ENCODE measurements at regions of chr14 and their contacts with region 1.

Region 1: GRCh38 chr14:94485944-94486841 is 10.2 kb upstream of the SERPINA9 start:
- DNase-seq: peak; percentile 68
- H3K4me3 Mint-ChIP-seq: no peak overlapping the region
- H3K27ac Mint-ChIP-seq: no peak overlapping the region
- H3K4me1 Mint-ChIP-seq: no peaks in the 10 kb centered on the region
- H3K27me3 Mint-ChIP-seq: no peaks in the 10 kb centered on the region
- CTCF ChIP-seq: peak; percentile 97

Region 2: DNA sequence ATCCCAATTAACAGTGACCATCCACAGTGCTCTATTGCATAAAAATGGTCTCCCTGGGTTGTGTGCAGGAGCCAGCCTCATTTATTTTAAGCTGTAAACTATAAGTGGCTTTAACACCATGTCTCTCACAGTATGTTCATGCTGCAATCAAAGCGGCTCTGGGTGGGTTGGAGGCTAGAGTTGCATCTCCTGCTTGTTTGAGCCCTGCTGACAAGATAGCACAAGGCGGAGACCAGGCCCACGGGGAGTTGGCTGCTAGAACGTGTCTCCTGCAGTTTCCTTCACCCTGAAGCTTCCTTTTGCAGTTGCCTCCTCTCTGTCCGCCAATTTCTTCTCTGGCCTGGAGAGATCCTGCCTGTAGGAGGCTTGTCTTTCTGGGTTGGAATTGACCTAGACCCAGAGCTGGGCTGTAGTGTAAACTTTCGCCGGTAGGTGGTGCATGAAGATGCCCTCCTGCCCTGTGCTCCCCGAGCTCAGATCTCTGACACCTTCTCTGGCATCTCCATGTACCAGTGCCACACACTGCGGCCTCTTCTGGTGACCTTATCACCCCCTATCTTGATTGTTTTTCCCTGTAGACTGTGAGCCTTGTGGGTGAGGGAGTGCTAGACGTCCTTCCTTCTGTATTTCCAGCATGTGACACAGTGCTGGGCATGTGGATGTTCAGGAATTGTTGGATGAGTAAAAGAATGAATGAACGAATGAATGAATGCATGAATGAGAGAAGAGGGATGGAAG is 449.7 kb before region 1 on chr14:
- CTCF ChIA-PET with region 1: interaction called, 12 read pairs
- POLR2A ChIA-PET with region 1: no interaction called
- intact Hi-C with region 1: no loop called
- DNase-seq: peak; percentile 79
- H3K4me3 Mint-ChIP-seq: no peak overlapping the region
- H3K27ac Mint-ChIP-seq: no peak overlapping the region
- H3K4me1 Mint-ChIP-seq: peaks cover 5% of the 10 kb centered on the region
- H3K27me3 Mint-ChIP-seq: no peaks in the 10 kb centered on the region
- CTCF ChIP-seq: peak; percentile 74

Region 3: DNA sequence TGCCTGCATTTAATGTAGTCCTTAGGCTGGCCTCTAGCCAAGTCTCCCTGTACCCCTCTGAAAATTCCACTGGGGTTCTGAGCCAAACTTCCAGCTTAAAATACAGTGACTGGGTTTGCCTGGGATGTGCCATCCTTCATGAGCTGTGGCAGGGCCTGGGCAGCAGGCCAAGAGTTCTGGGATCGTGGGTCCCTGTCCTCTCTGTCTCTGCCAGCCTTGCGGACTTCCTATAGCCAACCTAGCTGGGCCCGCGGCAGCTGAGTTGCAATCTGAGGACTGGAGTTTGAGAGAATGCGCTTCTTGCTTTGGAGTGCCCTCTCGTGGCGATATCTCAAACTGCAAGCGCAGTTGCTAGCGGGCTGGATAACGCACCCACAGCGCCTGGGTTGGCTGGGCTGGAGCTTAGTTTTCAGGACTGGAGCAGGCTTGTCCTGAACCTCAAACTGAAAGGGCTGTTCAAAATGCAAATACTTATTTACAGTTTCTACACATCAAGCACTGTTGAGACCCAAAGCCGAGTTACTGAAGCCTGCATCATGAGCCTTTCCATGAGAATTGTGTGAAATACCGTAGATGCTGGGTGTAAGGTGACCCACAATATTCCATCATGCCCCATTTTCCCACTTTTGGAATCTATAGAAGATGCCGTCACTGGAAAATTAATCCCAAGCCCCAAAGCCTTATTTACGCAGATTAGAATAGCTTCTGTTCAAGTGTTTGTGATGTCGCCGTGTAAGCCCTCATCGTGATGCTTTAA is 349.4 kb before region 1 on chr14:
- CTCF ChIA-PET with region 1: interaction called, 38 read pairs
- POLR2A ChIA-PET with region 1: no interaction called
- intact Hi-C with region 1: loop called (anchors 1 kb)
- DNase-seq: peak; percentile 82
- H3K4me3 Mint-ChIP-seq: no peak overlapping the region
- H3K27ac Mint-ChIP-seq: no peak overlapping the region
- H3K4me1 Mint-ChIP-seq: no peaks in the 10 kb centered on the region
- H3K27me3 Mint-ChIP-seq: no peaks in the 10 kb centered on the region
- CTCF ChIP-seq: peak; percentile 94

Region 4: DNA sequence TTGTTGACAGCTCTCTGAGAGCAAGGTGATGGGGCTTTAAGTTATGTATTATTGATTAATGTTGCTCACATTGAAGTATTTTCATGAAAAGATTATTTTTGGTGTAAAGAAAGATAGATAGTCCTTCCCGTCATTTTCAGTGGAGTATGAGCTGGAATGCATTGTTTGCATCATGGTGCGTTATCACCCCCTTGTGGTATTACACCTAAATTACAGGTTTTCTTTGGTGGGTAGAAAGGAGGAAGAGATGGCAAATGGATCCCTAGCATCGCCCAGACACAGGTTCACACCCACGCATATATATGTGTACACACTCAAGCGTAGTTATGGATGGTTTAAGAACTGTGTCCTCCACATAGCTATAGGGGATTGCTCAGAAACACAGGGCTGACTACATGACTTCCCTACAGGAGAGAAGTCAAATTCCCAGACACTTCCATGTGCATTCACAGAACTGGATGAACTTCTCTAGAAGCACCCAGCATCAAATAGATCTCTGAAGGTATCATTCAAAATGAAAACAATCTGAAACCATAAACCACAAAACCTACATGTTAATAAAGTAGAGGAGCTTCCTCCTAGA is 178.7 kb before region 1 on chr14:
- CTCF ChIA-PET with region 1: no interaction called
- POLR2A ChIA-PET with region 1: no interaction called
- intact Hi-C with region 1: loop called (anchors 10 kb)
- DNase-seq: peak; percentile 45
- H3K4me3 Mint-ChIP-seq: no peak overlapping the region
- H3K27ac Mint-ChIP-seq: no peak overlapping the region
- H3K4me1 Mint-ChIP-seq: no peaks in the 10 kb centered on the region
- H3K27me3 Mint-ChIP-seq: no peaks in the 10 kb centered on the region
- CTCF ChIP-seq: peak; percentile 23

Region 5: DNA sequence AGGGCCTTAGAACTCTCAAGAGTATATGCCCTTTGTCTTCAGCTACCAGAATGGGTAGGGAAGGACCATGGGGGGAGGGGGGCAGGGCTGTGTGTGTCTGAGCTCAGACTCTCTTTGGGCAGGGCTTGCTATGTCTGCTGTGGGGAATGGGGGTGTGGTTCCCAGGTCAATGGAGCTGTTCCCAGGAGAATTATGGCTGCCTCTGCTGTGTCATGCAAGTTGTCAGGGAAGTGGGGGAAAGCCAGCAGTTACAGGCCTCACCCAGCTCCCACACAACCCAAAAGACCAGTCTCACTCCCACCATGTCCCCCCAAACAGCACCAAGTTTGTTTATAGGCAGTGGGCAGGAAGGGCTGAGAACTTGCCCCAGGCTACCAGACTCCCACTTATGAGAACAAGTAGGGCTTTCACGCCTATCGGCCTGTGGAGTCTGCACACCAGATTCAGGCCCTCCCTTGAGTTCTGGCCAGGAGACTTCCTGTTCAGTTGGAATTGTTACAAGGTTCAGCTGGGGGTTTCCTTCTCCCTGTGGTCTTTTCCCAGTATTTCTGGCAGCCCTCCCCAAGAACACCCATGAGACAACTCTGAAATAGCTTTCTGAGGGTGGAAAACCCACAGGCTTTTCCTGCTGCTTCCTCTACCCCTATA is 27.5 kb before region 1 on chr14:
- CTCF ChIA-PET with region 1: interaction called, 13 read pairs
- POLR2A ChIA-PET with region 1: no interaction called
- intact Hi-C with region 1: no loop called
- DNase-seq: no peak
- H3K4me3 Mint-ChIP-seq: no peak overlapping the region
- H3K27ac Mint-ChIP-seq: no peak overlapping the region
- H3K4me1 Mint-ChIP-seq: no peaks in the 10 kb centered on the region
- H3K27me3 Mint-ChIP-seq: peaks cover 19% of the 10 kb centered on the region
- CTCF ChIP-seq: no peak

Region 6: DNA sequence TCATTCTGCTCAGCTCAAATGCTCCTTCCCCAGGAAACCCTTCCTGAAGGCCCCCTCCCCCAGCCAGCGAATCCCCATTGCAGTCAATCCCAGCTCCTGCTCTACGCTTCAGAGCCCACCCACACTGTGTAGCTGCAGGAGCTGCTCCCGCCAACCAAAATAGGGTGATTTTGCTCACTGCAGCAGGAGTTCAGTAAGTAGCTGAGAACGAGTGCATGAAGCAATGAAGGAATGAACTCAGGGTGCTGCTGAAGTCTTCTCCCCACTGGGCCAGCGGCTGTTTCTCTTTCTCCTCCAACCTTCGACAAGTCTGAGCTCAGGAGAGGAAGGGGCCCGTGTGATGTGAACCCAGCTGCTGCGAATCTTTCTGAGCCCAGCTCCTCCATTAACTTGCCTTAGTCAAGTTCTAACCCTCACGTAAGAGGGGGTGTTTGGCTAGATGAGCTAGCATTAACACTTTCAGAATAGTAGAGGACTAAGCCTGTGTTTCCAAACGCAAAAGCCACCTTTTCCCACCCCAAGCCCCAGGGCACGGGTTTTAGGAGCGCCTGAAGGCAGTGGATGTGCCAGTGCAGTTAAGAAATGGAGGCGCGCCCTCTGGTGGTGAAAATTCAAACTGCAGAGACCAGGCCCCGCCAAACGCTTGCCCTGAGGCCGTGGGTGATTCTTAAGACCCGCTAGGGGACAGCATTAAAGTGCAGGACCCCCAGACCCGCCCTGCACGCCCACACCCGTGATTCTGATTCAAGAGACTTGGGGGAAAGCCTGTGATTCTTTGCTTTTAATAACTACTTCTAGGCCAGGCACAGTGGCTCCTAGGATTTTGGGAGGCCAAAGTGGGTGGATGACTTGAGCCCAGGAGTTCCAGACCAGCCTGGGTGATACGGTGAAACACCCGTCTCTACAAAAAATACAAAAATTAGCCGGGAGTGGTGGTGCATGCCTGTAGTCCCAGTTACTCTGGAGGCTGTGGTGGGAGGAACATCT is 63.1 kb after region 1 on chr14:
- CTCF ChIA-PET with region 1: interaction called, 13 read pairs
- POLR2A ChIA-PET with region 1: no interaction called
- intact Hi-C with region 1: no loop called
- DNase-seq: peak; percentile 65
- H3K4me3 Mint-ChIP-seq: no peak overlapping the region
- H3K27ac Mint-ChIP-seq: no peak overlapping the region
- H3K4me1 Mint-ChIP-seq: no peaks in the 10 kb centered on the region
- H3K27me3 Mint-ChIP-seq: no peaks in the 10 kb centered on the region
- CTCF ChIP-seq: peak; percentile 93

Measured in MCF 10A (cell line).